ENCODE measurements at regions of chr20 and their contacts with region 1.

Region 1: DNA sequence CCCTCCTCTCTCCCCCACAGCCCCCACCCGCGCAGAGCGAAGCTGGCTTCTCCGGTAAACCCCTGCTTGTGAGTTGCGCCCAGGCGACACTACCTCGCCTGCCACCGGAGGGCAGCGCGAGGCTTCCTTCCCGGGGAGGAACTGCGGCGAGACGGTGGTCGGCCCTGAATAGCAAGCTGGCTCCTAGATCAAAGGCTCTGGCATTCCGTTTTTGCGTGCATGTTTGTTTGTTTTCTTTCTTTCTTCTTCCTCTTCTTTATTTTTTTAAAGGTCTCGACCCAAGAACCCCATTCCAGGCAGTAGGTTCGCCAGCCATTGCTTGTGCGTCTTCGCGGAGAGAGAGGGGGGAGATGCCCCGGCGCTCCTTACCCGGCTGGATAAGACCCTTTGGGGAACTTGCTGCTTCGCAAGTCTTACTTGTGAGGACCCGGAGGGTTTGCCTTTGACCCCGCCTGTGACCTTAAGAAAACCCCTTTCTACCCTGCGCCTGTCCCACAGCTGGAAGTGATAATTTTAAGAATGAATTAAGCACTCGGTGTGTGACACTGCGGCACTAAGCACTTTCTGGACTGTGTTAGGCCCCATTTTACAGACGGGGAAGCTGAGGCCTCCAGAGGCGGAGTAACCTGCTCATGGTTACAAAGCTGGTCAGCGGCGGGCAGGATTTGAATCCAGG is 92.7 kb upstream of the SIRPA start:
- DNase-seq: no peak
- ATAC-seq: peak; percentile 88
- H3K4me3 ChIP-seq: peak overlapping the region; percentile 62
- H3K27ac ChIP-seq: no peak overlapping the region
- H3K4me1 ChIP-seq: peaks cover 13% of the 10 kb centered on the region
- H3K27me3 ChIP-seq: peaks cover 2% of the 10 kb centered on the region in 2 experiments; a peak in 1 of 4 replicates
- CTCF ChIP-seq: peak; percentile 75 to 78 (median 77)
- EP300 ChIP-seq: no peak
- POLR2A ChIP-seq: no peak
- RAD21 ChIP-seq: peak; percentile 83

Region 2: DNA sequence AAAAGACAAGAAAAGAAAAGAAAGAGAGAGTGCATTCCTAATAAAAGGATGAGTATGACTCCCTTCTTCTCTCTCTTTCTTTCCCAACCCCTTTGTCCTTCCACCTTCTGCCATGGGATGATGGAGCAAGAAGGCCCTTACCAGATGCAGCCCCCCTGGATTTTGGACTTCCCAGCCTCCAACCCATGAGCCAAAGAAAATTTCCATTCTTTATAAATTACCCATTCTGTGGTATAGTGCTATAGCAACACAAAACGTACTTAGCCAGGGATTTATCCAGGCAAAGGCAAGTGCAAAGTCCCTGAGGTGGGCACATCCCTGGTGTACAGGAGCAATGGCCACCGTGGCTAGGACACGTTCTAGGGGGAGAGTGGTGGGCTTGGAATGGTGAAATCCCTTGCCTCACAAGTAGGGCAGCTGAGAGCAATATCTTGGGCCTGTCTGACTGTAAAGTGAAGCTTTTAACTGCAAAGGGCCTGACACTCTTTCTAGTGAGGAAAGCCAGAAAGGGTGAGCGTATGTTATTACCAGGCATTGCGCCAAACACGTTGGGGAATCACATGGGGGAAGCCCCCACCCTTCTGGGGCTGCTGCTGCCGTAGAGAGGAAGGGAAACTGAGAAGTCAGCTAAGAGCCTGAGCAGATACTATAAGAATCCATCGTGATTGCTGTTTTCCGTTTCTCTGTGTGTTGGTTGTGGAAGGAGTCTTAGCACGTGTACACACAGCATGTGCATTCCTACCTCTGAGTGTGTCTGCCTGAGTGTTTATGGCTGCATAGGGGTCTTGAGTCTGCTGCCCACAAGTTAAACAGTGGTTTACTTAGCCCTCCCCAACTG is 42.0 kb after region 1 on chr20:
- CTCF ChIA-PET with region 1: interaction called, 7 read pairs
- POLR2A ChIA-PET with region 1: no interaction called
- RAD21 ChIA-PET with region 1: no interaction called
- SMC1A ChIA-PET with region 1: interaction called, 11 read pairs
- in situ Hi-C with region 1: no loop called
- intact Hi-C with region 1: no loop called
- DNase-seq: peak; percentile 80
- ATAC-seq: peak; percentile 99
- H3K4me3 ChIP-seq: no peak overlapping the region
- H3K27ac ChIP-seq: peak overlapping the region; percentile 29; the same call in 1 of the 2 replicates
- H3K4me1 ChIP-seq: peaks cover 21% of the 10 kb centered on the region
- H3K27me3 ChIP-seq: no peaks in the 10 kb centered on the region
- CTCF ChIP-seq: no peak
- EP300 ChIP-seq: peak; percentile 66 to 78; a peak in 3 of 4 replicates
- POLR2A ChIP-seq: no peak
- RAD21 ChIP-seq: 0 out of 2 replicates have a peak, but pooled peaks have one; percentile 2

Region 3: GRCh38 chr20:1900321-1900801 is 97.8 kb after region 1 on chr20:
- CTCF ChIA-PET with region 1: interaction called, 14 read pairs
- POLR2A ChIA-PET with region 1: no interaction called
- RAD21 ChIA-PET with region 1: interaction called, 3 read pairs
- SMC1A ChIA-PET with region 1: interaction called, 4 read pairs
- in situ Hi-C with region 1: no loop called
- intact Hi-C with region 1: loop called (anchors 2 kb)
- DNase-seq: no peak
- ATAC-seq: peak; percentile 70
- H3K4me3 ChIP-seq: no peak overlapping the region
- H3K27ac ChIP-seq: no peak overlapping the region
- H3K4me1 ChIP-seq: peaks cover 35% of the 10 kb centered on the region
- H3K27me3 ChIP-seq: no peaks in the 10 kb centered on the region
- CTCF ChIP-seq: peak; percentile 61 to 69 (median 62)
- EP300 ChIP-seq: no peak
- POLR2A ChIP-seq: no peak
- RAD21 ChIP-seq: peak; percentile 54

Region 4: DNA sequence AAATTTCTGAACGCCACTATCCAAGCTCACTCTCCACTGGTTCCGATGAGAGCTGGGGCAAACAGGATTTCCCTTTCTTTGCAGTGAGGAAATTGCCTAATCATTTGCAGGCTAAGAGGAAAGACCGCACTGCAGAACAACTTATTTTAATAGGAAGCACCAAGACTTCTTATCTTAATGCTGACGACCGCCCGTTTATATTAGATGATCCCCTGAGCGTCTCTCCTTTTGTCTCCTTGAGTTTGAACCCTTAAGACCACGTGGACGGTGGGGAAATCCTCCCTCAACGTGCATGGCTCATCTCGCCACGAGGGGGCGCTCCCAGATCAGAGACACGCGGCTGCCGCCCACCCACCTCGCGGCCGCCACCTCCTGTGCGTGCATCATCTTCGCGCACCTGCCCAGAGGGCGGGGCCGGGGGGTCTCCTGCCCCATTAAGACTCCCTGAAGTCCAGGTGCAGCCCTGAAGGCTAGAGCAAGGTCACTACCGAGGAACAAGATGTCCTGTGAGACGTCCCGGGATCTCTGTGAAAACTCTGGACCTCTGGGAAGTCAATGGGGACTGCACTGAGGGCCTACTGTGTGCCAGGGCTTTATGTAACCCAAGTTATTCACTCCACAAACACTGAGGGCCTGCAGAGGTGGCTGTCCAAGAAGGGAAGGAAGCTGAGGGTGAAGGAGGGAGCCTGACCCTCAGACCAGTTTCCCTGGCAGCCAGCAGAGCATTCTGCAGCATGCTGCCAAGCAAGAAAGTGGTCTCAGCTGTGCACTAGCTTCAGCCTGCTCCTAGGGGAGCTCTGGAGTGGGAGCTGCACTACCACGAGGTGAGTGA is 163.2 kb after region 1 on chr20:
- CTCF ChIA-PET with region 1: interaction called, 28 read pairs
- POLR2A ChIA-PET with region 1: no interaction called
- RAD21 ChIA-PET with region 1: interaction called, 10 read pairs
- SMC1A ChIA-PET with region 1: interaction called, 13 read pairs
- in situ Hi-C with region 1: no loop called
- intact Hi-C with region 1: no loop called
- DNase-seq: peak; percentile 19
- ATAC-seq: peak; percentile 97
- H3K4me3 ChIP-seq: no peak overlapping the region
- H3K27ac ChIP-seq: no peak overlapping the region
- H3K4me1 ChIP-seq: no peaks in the 10 kb centered on the region; the same call in 1 of the 2 replicates
- H3K27me3 ChIP-seq: peaks cover 0 to 3% of the 10 kb centered on the region in 2 experiments; a peak in 3 of 4 replicates
- CTCF ChIP-seq: peak; percentile 92 to 95 (median 92)
- EP300 ChIP-seq: no peak
- POLR2A ChIP-seq: no peak
- RAD21 ChIP-seq: peak; percentile 84

Region 5: GRCh38 chr20:2032155-2032554 is 229.6 kb after region 1 on chr20:
- CTCF ChIA-PET with region 1: no interaction called
- POLR2A ChIA-PET with region 1: no interaction called
- RAD21 ChIA-PET with region 1: no interaction called
- SMC1A ChIA-PET with region 1: no interaction called
- in situ Hi-C with region 1: no loop called
- intact Hi-C with region 1: no loop called
- DNase-seq: no peak
- ATAC-seq: no peak
- H3K4me3 ChIP-seq: no peak overlapping the region
- H3K27ac ChIP-seq: no peak overlapping the region
- H3K4me1 ChIP-seq: no peaks in the 10 kb centered on the region
- H3K27me3 ChIP-seq: peaks cover 2 to 3% of the 10 kb centered on the region in 2 experiments; a peak in 3 of 4 replicates
- CTCF ChIP-seq: no peak
- EP300 ChIP-seq: no peak
- POLR2A ChIP-seq: no peak
- RAD21 ChIP-seq: no peak

Region 6: DNA sequence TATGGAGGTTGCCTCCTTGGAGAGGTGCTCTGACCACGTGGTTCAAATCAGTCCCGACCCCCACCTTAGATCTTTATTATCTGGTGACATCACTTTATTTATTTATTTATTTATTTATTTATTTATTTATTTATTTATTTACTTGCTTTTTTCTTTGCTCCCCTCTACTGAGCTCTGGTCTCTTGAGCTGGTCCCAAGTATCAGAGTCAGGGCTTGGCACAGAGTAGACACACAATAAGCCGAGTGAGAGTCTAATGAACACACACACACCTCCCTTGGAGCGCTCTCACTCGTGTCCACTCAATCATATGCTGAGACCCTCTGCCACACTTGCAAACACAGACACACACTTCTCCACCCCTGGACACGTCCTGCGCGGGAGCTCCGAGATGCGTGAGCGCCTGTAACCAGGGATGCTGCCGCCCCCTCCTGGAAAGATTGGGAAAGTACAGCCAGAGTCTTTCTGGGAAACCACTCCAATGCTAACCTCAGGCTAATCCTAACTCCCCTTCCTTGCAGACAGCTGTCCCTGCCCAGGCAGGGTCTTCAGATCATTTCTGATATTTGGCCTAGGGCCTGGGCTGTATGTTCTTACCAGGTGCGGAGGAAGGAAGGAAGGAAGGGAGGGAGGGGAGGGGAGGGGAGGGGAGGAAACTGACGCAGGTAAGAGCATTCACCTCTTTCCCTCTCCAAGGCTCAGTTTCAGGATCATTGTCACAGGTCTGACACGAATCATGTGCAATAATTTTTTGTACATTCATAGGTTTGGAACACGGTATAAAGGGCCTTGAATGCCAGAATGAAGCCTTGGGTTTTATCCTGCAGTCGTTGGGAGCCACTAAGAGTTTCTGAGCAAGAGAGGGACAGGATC is 370.0 kb after region 1 on chr20:
- CTCF ChIA-PET with region 1: interaction called, 19 read pairs
- POLR2A ChIA-PET with region 1: no interaction called
- RAD21 ChIA-PET with region 1: interaction called, 12 read pairs
- SMC1A ChIA-PET with region 1: interaction called, 3 read pairs
- in situ Hi-C with region 1: no loop called
- intact Hi-C with region 1: loop called (anchors 5 kb)
- DNase-seq: peak; percentile 1
- ATAC-seq: peak; percentile 86
- H3K4me3 ChIP-seq: no peak overlapping the region
- H3K27ac ChIP-seq: no peak overlapping the region
- H3K4me1 ChIP-seq: no peaks in the 10 kb centered on the region
- H3K27me3 ChIP-seq: no peaks in the 10 kb centered on the region
- CTCF ChIP-seq: peak; percentile 88 to 93 (median 92)
- EP300 ChIP-seq: no peak
- POLR2A ChIP-seq: no peak
- RAD21 ChIP-seq: peak; percentile 93

Measured in GM12878 (cell line).